CD4-positive, alpha-beta memory T cell (primary cell): ENCODE measurements at regions of chr1 and their contacts with region 1.

Region 1: DNA sequence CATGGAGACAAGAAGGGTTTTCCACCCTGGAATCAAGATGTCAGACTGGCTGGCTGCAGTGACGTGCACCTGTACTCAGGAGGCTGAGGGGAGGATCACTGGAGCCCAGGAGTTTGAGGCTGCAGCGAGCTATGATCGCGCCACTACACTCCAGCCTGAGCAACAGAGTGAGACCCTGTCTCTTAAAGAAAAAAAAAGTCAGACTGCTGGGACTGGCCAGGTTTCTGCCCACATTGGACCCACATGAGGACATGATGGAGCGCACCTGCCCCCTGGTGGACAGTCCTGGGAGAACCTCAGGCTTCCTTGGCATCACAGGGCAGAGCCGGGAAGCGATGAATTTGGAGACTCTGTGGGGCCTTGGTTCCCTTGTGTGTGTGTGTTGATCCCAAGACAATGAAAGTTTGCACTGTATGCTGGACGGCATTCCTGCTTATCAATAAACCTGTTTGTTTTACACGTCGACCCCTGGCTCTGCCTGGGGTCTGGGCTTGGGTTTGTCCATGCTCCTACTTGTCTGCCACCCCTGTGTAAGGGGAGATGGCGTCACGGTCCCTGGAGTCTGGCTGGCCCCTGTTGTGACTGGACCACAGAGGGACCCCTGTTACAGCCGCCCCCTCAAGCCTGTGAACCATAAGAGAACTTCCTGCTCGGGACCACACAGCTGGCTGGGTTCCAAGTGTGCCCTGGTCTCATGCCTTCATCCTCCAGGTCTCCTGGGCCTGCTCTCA is 20.9 kb upstream of the VPS13D start:
- DNase-seq: peak; percentile 72 to 85 (median 79)
- H3K4me3 ChIP-seq: no peak overlapping the region
- H3K4me3 Mint-ChIP-seq: peak overlapping the region in 7 of 8 donors; percentile 26 to 82 (median 47)
- H3K27ac ChIP-seq: peak overlapping the region; percentile 36
- H3K27ac Mint-ChIP-seq: peak overlapping the region; percentile 78 to 93 (median 88)
- H3K4me1 ChIP-seq: peaks cover 57% of the 10 kb centered on the region
- H3K4me1 Mint-ChIP-seq: peaks cover 39 to 71% (median 48%) of the 10 kb centered on the region in 4 donors
- H3K27me3 ChIP-seq: no peaks in the 10 kb centered on the region
- H3K27me3 Mint-ChIP-seq: no peaks in the 10 kb centered on the region

Region 2: DNA sequence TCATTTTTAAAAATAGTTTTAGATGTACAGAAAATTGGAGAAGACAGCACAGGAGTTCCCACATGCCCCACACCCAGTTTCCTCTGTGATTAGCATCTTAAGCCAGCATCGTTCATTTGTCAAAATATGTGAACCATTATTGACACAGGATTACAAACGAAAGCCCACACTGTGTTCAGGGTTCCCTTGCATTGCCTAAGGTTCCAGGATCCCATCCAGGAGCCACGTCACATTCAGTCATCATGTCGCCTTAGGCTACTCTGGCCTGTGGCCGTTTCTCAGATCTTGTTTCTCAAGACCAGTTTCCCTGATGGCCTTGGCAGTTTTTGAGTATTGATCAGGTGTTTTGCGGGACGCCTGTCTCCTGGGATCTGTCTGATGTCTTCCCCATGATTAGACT is 76.8 kb before region 1 on chr1:
- CTCF ChIA-PET with region 1: interaction called, 296 read pairs
- POLR2A ChIA-PET with region 1: interaction called, 107 read pairs
- intact Hi-C with region 1: no loop called
- DNase-seq: no peak
- H3K4me3 ChIP-seq: peak overlapping the region; percentile 6 to 49
- H3K4me3 Mint-ChIP-seq: peak overlapping the region in 7 of 8 donors; percentile 17 to 87 (median 79)
- H3K27ac ChIP-seq: peak overlapping the region; percentile 45
- H3K27ac Mint-ChIP-seq: peak overlapping the region; percentile 95 to 98 (median 97)
- H3K4me1 ChIP-seq: peaks cover 59% of the 10 kb centered on the region
- H3K4me1 Mint-ChIP-seq: peaks cover 28 to 63% (median 41%) of the 10 kb centered on the region in 4 donors
- H3K27me3 ChIP-seq: no peaks in the 10 kb centered on the region
- H3K27me3 Mint-ChIP-seq: no peaks in the 10 kb centered on the region

Region 3: GRCh38 chr1:12161662-12162458 is 47.1 kb before region 1 on chr1:
- CTCF ChIA-PET with region 1: interaction called, 10 read pairs
- POLR2A ChIA-PET with region 1: interaction called, 33 read pairs
- intact Hi-C with region 1: no loop called
- DNase-seq: peak; percentile 70 to 93 (median 71)
- H3K4me3 ChIP-seq: peak overlapping the region in 1 of 2 donors; percentile 38
- H3K4me3 Mint-ChIP-seq: peak overlapping the region; percentile 24 to 90 (median 76)
- H3K27ac ChIP-seq: peak overlapping the region; percentile 65
- H3K27ac Mint-ChIP-seq: peak overlapping the region; percentile 91 to 100 (median 96)
- H3K4me1 ChIP-seq: peaks cover 92% of the 10 kb centered on the region
- H3K4me1 Mint-ChIP-seq: peaks cover 53 to 87% (median 71%) of the 10 kb centered on the region in 4 donors
- H3K27me3 ChIP-seq: no peaks in the 10 kb centered on the region
- H3K27me3 Mint-ChIP-seq: no peaks in the 10 kb centered on the region

Region 4: GRCh38 chr1:12177999-12178441 is 30.9 kb before region 1 on chr1:
- CTCF ChIA-PET with region 1: interaction called, 44 read pairs
- POLR2A ChIA-PET with region 1: interaction called, 48 read pairs
- intact Hi-C with region 1: loop called (anchors 2 kb)
- DNase-seq: peak; percentile 86 to 99 (median 90)
- H3K4me3 ChIP-seq: peak overlapping the region; percentile 8 to 32
- H3K4me3 Mint-ChIP-seq: peak overlapping the region; percentile 80 to 94 (median 88)
- H3K27ac ChIP-seq: peak overlapping the region; percentile 97
- H3K27ac Mint-ChIP-seq: peak overlapping the region; percentile 98 to 100 (median 99)
- H3K4me1 ChIP-seq: peaks cover 100% of the 10 kb centered on the region
- H3K4me1 Mint-ChIP-seq: peaks cover 45 to 98% (median 83%) of the 10 kb centered on the region in 4 donors
- H3K27me3 ChIP-seq: no peaks in the 10 kb centered on the region
- H3K27me3 Mint-ChIP-seq: peaks cover 0 to 3% of the 10 kb centered on the region in 2 donors

Region 5: DNA sequence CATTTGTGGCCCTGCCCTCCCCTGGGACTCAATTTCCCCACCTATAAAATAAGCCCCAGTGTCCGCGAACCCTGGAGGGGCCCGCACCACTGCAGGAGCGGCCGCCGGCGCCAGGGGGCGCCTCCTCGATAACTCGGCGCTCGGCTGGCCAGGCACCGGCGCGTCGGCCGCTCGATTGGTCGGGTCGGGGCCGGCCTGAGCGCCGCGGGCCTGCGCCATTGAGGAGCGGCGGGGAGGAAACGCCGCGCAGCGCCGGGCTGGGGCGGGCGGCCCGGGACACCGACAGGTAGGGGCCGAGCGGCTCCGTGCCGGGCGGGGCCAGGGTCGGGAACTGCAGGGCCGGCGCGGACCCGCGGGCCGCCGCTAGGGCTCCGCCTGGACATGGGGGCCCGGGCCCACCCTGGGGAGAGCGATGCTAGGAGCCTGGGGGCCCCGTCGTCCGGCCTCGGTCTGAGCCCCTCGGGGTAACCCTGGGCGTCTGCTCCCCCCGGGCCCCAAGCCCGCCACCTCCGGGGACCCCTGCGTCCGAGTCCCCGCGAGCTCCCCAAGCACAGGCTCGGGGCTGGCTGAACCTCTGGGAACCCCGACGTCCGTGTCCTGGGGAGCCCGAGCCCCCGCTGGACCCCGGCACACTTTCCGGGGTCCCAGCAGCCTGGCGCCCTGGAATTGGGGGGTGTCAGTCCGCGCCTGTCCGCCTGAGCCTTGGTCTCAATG is 21.1 kb after region 1 on chr1 and contains the start of gene VPS13D:
- CTCF ChIA-PET with region 1: interaction called, 28 read pairs
- POLR2A ChIA-PET with region 1: interaction called, 22 read pairs
- intact Hi-C with region 1: loop called (anchors 2 kb)
- DNase-seq: peak; percentile 76 to 84 (median 83)
- H3K4me3 ChIP-seq: peak within 1 kb of the TSS; percentile 86 to 90
- H3K4me3 Mint-ChIP-seq: peak within 1 kb of the TSS; percentile 88 to 93 (median 91)
- H3K27ac ChIP-seq: peak within 1 kb of the TSS; percentile 82
- H3K27ac Mint-ChIP-seq: peak within 1 kb of the TSS in 6 of 7 donors; percentile 81 to 94 (median 92)
- H3K4me1 ChIP-seq: peaks cover 48% of the 10 kb centered on the region
- H3K4me1 Mint-ChIP-seq: peaks cover 13 to 27% (median 22%) of the 10 kb centered on the region in 4 donors
- H3K27me3 ChIP-seq: no peaks in the 10 kb centered on the region
- H3K27me3 Mint-ChIP-seq: no peaks in the 10 kb centered on the region
- total RNA-seq, gene VPS13D: 92.7 to 96.3 TPM